ENCODE measurements at regions of chr11 and their contacts with region 1.

Region 1: DNA sequence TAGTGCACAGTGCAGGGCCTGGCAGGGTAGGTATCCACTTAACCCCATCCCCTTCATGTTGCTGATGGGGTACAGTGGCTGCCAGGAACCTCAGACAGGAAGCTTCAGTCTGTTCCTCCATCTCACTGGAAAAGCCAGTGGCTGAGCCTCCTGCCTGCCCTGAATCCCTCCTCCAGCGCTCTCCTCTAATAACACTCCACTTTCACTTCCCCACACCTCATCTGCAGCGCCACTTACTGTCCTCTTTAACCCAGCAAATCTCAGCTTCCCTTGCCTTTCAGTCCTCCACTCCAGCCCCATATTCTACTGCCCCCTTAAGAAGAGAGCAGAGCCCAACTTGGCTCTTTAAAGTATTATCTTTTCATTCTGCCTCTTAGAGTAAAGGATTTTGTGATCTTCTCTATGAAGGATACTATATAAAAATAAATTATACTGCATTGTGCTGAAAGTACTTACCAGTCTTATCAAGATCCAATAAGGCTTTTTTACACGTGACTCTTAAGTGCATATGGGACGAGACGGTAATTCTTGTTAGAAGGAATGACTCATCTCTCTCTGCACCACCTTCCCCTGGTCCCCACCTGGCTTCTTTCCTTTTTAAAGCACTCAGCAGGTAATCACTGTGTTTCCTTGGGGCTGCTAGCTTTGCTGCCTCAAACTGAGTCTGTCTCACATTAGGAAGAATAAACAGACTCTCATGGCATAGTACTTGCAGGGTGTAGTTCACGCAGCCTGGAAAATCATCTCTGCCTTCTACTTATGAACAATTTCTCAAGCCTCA is 238.0 kb upstream of the NARS2 start:
- DNase-seq: no peak
- H3K4me3 ChIP-seq: no peak overlapping the region
- H3K27ac ChIP-seq: peak overlapping the region; percentile 13
- H3K27me3 ChIP-seq: no peaks in the 10 kb centered on the region
- CTCF ChIP-seq: peak; percentile 33

Region 2: GRCh38 chr11:78784321-78785061 is 28.2 kb before region 1 on chr11:
- CTCF ChIA-PET with region 1: interaction called, 8 read pairs
- POLR2A ChIA-PET with region 1: interaction called, 11 read pairs
- DNase-seq: peak; percentile 70
- H3K4me3 ChIP-seq: no peak overlapping the region
- H3K27ac ChIP-seq: peak overlapping the region; percentile 81
- H3K27me3 ChIP-seq: no peaks in the 10 kb centered on the region
- CTCF ChIP-seq: no peak

Region 3: DNA sequence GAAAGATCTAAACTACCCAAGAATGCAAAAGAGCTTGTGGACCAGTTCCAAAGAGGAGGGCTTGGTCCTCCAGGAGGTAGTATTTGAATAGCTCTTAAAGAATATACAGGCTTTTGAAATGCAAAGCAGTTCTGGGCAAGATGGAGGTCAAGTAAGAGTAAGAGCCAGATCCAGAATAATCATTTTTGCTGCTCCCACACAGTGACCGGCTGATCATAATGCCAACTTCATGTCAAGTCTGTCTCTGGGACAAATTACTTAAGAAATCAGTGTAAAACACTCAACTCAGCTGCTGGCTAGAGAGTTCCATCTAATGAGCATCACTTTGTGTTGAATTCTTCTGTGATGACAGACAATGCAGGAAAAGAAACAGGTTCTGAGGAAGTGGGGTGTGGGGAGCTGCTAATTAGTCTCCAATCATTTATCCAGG is 12.9 kb after region 1 on chr11:
- CTCF ChIA-PET with region 1: interaction called, 8 read pairs
- POLR2A ChIA-PET with region 1: interaction called, 11 read pairs
- DNase-seq: no peak
- H3K4me3 ChIP-seq: no peak overlapping the region
- H3K27ac ChIP-seq: no peak overlapping the region
- H3K27me3 ChIP-seq: no peaks in the 10 kb centered on the region
- CTCF ChIP-seq: 0 out of 2 replicates have a peak, but pooled peaks have one; percentile 6

Region 4: DNA sequence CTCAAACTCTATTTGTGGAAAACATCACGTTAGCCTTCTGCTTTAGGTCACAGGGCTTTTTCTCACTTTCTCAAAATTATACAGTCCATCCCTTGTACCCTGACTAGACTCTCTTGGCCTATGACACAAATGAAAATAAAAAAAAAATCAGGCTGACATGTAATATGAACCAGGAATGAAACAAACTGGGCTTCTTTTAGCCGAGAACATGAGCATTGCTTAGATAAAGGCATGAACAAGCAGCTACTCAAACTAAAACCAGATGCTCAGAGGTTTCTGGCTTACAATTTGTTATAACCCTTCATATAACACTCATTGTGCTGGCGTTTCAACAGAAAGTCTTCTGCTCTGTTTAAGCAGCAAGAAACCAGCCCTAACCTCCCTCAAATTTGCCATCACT is 27.5 kb after region 1 on chr11:
- CTCF ChIA-PET with region 1: interaction called, 4 read pairs
- POLR2A ChIA-PET with region 1: interaction called, 11 read pairs
- DNase-seq: peak; percentile 78
- H3K4me3 ChIP-seq: no peak overlapping the region; the same call in 1 of the 2 replicates
- H3K27ac ChIP-seq: peak overlapping the region; percentile 94
- H3K27me3 ChIP-seq: no peaks in the 10 kb centered on the region
- CTCF ChIP-seq: no peak

Region 5: DNA sequence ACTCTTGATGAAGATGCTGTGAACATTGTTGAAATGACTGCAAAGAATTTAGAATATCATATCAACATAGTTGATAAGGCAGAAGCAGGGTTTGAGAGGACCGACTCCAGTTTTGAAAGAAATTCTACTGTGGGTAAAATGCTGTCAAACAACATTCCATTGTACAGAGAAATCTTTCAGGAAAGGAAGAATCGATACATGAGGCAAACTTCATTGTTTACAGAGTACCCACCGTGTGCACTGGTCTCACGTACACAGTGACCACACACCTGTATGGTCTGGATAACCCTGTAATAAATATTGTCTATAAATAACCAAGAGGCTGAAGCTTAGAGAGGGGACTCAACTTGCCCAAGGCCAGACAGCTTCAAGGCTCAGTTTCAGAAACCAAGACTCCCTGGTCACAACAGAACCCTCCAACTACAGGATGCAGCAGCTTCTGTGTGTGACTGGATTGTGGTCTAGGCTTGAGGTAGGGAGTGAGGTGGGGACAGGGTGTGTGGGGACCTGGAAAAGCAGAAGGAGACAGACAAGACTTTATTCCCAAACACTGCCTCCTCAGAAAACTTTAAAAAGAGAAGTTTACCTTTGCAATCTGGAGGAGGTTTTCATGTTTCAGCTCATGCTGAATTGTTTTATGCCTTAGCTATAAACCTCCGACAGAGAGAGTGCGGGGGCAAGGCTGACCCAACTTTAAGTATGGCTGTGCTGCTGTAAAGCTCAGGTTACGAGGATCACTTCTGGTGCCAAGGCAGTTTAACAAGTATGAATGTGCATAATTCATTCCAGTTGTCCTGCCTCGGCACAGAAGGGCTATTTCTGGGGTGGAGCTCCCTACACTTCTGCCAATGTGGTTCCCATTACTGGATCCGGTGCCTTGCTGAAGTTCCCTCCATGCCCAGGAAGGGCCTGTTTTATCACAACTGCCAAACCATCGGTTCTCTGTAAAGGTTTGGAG is 134.5 kb after region 1 on chr11:
- CTCF ChIA-PET with region 1: no interaction called
- POLR2A ChIA-PET with region 1: no interaction called
- DNase-seq: no peak
- H3K4me3 ChIP-seq: no peak overlapping the region
- H3K27ac ChIP-seq: no peak overlapping the region
- H3K27me3 ChIP-seq: peaks cover 3% of the 10 kb centered on the region
- CTCF ChIP-seq: no peak